H1 (cell line): ENCODE measurements at regions of chr1 and their contacts with region 1.

Region 1: DNA sequence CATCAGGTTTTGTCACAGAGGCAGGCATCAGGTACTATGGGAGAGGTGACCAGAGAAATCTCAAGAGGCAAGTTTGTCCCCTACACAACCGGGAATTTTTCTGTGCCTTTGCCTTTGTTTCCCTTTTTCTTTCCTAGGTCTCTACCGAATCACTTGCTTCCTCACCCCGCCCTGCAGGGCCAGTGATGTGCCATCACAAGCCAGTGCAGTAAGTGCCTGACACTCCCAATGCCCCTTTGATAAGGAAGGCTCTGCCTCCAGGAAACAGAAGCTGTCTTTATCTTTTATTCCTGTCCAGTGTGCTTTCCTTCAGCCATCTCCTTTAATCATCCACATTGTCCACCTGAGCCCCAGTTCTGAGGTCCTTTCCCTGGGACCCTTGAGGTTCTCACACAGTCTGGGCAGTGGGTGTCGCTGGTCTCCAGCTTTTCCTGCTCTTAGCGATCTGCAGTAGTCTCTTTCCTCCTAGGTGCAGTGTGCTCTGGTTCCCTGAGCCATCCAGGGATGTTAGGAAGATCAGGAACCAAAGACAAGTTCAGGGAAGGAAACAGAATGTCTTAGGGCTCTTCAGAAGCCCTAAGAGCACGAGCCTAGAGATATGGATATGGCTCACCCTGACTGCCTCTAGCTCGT is 36.6 kb downstream of the GJA5 start:
- DNase-seq: peak; percentile 53 to 61
- H3K4me3 ChIP-seq: no peak overlapping the region
- H3K27ac ChIP-seq: no peak overlapping the region
- H3K4me1 ChIP-seq: peaks cover 4 to 9% (median 7%) of the 10 kb centered on the region in 4 experiments
- H3K27me3 ChIP-seq: no peaks in the 10 kb centered on the region
- CTCF ChIP-seq: peak; percentile 83 to 96 (median 95)
- EP300 ChIP-seq: no peak
- POLR2A ChIP-seq: no peak
- RAD21 ChIP-seq: peak; percentile 100

Region 2: DNA sequence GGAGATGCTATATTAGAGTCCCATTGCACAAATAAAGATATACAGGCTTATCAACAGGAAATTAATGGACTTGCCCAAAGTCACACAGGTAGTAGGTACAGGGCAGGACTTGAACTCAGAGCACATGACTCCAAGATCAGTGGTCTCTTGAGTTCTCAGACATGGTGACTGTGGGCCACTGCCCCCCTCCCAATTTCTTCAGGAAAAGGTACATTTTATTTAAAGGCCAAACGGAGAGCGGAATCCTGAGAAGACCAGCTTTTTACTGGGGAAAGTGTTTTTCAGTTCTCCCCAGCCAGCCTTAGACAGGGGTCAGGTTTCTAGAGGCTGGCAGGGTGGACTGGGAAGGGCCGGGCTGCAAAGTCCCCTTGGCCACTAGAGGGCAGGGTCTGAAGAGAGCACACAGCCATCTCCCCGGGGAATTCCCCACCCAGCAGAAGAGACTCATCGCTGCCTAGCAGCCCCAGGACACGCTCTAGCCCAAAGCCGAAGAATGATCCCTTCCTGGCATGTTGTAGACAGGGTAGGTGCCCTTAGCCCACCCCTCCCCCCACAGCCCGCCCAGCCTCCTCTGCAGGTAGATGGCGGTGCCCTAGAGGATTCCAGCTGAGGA is 83.1 kb before region 1 on chr1:
- CTCF ChIA-PET with region 1: interaction called, 13 read pairs
- POLR2A ChIA-PET with region 1: no interaction called
- DNase-seq: peak; percentile 77 to 91
- H3K4me3 ChIP-seq: no peak overlapping the region
- H3K27ac ChIP-seq: no peak overlapping the region
- H3K4me1 ChIP-seq: no peaks in the 10 kb centered on the region; a peak in 1 of 7 replicates
- H3K27me3 ChIP-seq: no peaks in the 10 kb centered on the region
- CTCF ChIP-seq: peak; percentile 84 to 93 (median 93)
- EP300 ChIP-seq: 0 out of 3 replicates have a peak, but pooled peaks of 1 of the 2 experiments have one; percentile 40
- POLR2A ChIP-seq: no peak
- RAD21 ChIP-seq: peak; percentile 65 to 71

Region 3: GRCh38 chr1:147700042-147701006 is 23.5 kb before region 1 on chr1:
- CTCF ChIA-PET with region 1: interaction called, 11 read pairs
- POLR2A ChIA-PET with region 1: no interaction called
- DNase-seq: peak; percentile 33 to 70
- H3K4me3 ChIP-seq: no peak overlapping the region; a peak in 1 of 8 replicates
- H3K27ac ChIP-seq: no peak overlapping the region
- H3K4me1 ChIP-seq: no peaks in the 10 kb centered on the region; a peak in 1 of 7 replicates
- H3K27me3 ChIP-seq: no peaks in the 10 kb centered on the region; a peak in 1 of 7 replicates
- CTCF ChIP-seq: peak; percentile 69 to 94 (median 83)
- EP300 ChIP-seq: no peak
- POLR2A ChIP-seq: no peak
- RAD21 ChIP-seq: peak; percentile 72 to 83

Region 4: DNA sequence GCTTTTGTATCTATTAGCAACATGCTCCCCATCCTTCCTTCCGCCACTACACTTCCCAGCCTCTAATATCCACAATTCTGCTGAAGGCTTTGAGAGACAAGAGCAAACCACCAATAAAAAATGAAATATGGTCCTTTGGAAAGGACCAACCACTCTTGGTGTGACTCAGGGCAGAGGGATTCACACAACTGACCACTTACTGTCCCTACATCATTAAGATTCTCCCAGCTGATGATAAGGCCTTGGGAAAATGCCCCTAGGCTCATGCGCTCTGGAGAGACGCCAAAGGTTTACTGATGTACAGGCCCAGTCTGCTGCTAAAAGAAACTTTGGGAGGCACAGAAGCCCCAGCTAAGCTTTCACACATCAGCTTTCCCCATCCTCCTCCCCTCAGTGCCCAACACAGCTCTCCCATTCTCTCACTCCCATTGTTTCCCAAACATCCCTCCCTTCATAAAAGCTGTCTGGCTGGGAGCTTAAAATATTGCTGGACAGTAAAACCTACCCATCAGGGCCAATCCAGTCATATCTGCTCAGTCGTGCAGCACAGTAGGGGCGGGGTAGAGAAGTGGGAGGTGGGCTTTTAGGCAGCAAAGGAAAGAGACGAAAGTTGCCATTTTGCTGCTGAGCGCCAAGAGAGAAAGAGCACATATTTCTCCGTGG is 178.5 kb after region 1 on chr1 and contains the start of gene GJA8:
- CTCF ChIA-PET with region 1: interaction called, 21 read pairs
- POLR2A ChIA-PET with region 1: no interaction called
- DNase-seq: no peak
- H3K4me3 ChIP-seq: no peak within 1 kb of the TSS
- H3K27ac ChIP-seq: no peak within 1 kb of the TSS
- H3K4me1 ChIP-seq: no peaks in the 10 kb centered on the region
- H3K27me3 ChIP-seq: no peaks in the 10 kb centered on the region; a peak in 1 of 7 replicates
- CTCF ChIP-seq: no peak
- EP300 ChIP-seq: no peak
- POLR2A ChIP-seq: no peak
- RAD21 ChIP-seq: no peak
- total RNA-seq, gene GJA8: not detected in 2 replicates